ENCODE measurements at regions of chr5 and their contacts with region 1.

Region 1: GRCh38 chr5:40307920-40308319 is 371.8 kb upstream of the PTGER4 start:
- DNase-seq: no peak
- H3K4me3 Mint-ChIP-seq: no peak overlapping the region
- H3K27ac Mint-ChIP-seq: no peak overlapping the region
- H3K4me1 Mint-ChIP-seq: peaks cover 12% of the 10 kb centered on the region
- H3K27me3 Mint-ChIP-seq: no peaks in the 10 kb centered on the region

Region 2: GRCh38 chr5:40291338-40291737 is 16.6 kb before region 1 on chr5:
- intact Hi-C with region 1: no loop called
- DNase-seq: no peak
- H3K4me3 Mint-ChIP-seq: no peak overlapping the region
- H3K27ac Mint-ChIP-seq: no peak overlapping the region
- H3K4me1 Mint-ChIP-seq: peaks cover 9% of the 10 kb centered on the region
- H3K27me3 Mint-ChIP-seq: no peaks in the 10 kb centered on the region

Region 3: DNA sequence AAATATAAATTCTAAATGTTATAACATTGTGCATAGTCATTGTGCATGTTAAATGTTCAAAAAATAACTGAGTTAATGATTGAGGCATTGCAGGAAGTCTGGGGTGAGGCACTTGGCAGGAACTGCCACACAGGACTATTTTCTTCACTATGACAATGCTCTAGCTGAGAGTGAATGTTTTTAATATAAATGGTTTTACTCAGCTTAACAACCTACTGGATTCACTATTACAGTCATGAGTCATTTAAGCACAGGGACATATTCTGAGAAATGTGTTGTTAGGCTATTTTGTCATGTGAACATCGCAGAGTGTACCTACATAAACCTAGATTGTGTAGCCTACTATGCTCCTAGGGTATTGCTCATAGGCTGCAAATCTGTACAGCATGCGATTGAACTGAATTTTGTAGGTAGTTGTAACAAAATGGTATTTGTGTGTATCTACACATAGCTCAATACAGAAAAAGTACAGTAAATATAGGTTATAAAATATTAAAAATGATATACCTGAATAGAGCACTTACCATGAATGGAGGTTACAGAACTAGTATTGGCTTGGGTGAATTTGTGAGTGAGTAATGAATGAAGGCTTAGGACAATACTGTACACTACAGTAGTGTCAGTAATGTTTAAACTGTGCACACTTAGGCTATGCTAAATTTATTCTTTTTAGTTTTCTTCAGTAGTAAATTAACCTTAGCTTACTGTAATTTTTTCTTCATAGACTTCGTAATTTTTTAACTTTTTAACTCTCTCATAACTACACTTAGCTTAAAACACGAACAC is 25.7 kb after region 1 on chr5:
- intact Hi-C with region 1: loop called (anchors 1 kb)
- DNase-seq: no peak
- H3K4me3 Mint-ChIP-seq: no peak overlapping the region
- H3K27ac Mint-ChIP-seq: peak overlapping the region; percentile 27
- H3K4me1 Mint-ChIP-seq: peaks cover 43% of the 10 kb centered on the region
- H3K27me3 Mint-ChIP-seq: no peaks in the 10 kb centered on the region